ENCODE measurements at regions of chr3 and their contacts with region 1.

Region 1: DNA sequence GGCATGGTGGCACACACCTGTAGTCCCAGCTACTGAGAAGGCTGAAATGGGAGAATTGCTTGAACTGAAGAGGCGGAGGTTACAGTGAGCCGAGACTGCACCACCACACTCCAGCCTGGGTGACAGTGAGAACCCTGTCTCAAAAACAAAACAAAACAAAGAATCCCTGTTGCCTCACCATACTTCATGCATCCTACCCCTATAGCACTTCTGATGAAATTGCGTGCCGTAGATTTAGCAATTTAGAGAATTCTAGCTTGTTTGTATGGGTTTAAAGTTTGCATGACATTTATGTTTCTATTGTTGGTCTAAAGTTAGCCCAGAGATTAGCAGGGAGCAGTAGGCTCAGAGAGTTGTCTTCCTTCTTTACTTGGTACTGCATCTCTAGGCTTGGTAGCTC is 7.8 kb downstream of the RAB5A start:
- DNase-seq: no peak
- ATAC-seq: no peak
- H3K4me3 ChIP-seq: no peak overlapping the region
- H3K27ac ChIP-seq: no peak overlapping the region
- H3K4me1 ChIP-seq: peaks cover 8% of the 10 kb centered on the region
- H3K27me3 ChIP-seq: no peaks in the 10 kb centered on the region

Region 2: GRCh38 chr3:20013396-20013795 is 58.7 kb after region 1 on chr3:
- intact Hi-C with region 1: no loop called
- DNase-seq: no peak
- ATAC-seq: no peak
- H3K4me3 ChIP-seq: no peak overlapping the region
- H3K27ac ChIP-seq: no peak overlapping the region
- H3K4me1 ChIP-seq: no peaks in the 10 kb centered on the region
- H3K27me3 ChIP-seq: no peaks in the 10 kb centered on the region

Region 3: GRCh38 chr3:20141851-20142250 is 187.2 kb after region 1 on chr3:
- intact Hi-C with region 1: loop called in 1 of 4 experiments (anchors 10 kb)
- DNase-seq: peak; percentile 29 to 71 (median 59)
- ATAC-seq: peak; percentile 90 to 96
- H3K4me3 ChIP-seq: no peak overlapping the region
- H3K27ac ChIP-seq: peak overlapping the region; percentile 72
- H3K4me1 ChIP-seq: no peaks in the 10 kb centered on the region
- H3K27me3 ChIP-seq: no peaks in the 10 kb centered on the region

Measured in right cardiac atrium (tissue), 5 donors.